Uterus (tissue), 4 donors: ENCODE measurements at regions of chr5 and their contacts with region 1.

Region 1: GRCh38 chr5:127040796-127041520 is 10.6 kb upstream of the MARCHF3 start:
- DNase-seq: peak; percentile 36 to 40
- H3K4me3 ChIP-seq: no peak overlapping the region
- H3K27ac ChIP-seq: peak overlapping the region; percentile 67 to 70
- H3K4me1 ChIP-seq: peaks cover 0 to 5% of the 10 kb centered on the region in 2 donors
- H3K27me3 ChIP-seq: no peaks in the 10 kb centered on the region
- CTCF ChIP-seq: no peak
- POLR2A ChIP-seq: no peak

Region 2: DNA sequence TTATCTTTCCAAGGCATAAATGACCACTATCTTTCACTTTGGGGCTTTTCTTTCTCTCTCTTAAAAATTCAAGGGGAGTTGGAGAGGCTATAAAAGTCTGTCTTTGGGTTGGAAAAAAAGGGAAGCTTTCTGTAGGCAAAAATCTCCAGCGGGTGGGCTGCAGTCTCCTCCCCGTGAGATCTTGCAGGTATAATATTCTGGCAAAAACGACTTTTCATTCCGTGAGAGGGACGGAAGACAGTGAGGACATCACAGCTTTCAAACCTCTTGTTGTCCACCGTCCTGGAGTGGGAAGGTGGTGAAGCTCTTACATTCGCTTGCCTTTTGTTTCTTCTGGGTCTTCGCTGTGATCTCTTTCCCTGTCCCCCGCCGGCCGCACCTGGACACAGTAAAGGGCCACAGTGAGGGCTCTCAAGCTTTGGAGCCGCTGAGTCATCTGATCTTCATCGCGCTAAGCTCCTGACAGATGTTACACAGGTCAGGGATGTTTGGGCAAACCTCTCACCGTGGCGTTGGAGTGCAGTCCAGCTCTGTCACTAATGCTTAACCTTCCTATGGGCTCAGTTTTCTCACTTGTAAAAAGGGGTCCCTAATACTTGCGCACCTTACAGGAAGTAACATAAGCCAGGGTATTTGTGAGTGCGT is 187.7 kb after region 1 on chr5:
- intact Hi-C with region 1: no loop called
- DNase-seq: peak; percentile 15 to 40
- H3K4me3 ChIP-seq: peak overlapping the region; percentile 40 to 48
- H3K27ac ChIP-seq: peak overlapping the region; percentile 73 to 82
- H3K4me1 ChIP-seq: no peaks in the 10 kb centered on the region
- H3K27me3 ChIP-seq: no peaks in the 10 kb centered on the region
- CTCF ChIP-seq: no peak
- POLR2A ChIP-seq: no peak

Region 3: GRCh38 chr5:127612441-127613141 is 571.6 kb after region 1 on chr5:
- intact Hi-C with region 1: no loop called
- DNase-seq: no peak
- H3K4me3 ChIP-seq: no peak overlapping the region
- H3K27ac ChIP-seq: no peak overlapping the region
- H3K4me1 ChIP-seq: no peaks in the 10 kb centered on the region
- H3K27me3 ChIP-seq: no peaks in the 10 kb centered on the region
- CTCF ChIP-seq: no peak
- POLR2A ChIP-seq: no peak

Region 4: DNA sequence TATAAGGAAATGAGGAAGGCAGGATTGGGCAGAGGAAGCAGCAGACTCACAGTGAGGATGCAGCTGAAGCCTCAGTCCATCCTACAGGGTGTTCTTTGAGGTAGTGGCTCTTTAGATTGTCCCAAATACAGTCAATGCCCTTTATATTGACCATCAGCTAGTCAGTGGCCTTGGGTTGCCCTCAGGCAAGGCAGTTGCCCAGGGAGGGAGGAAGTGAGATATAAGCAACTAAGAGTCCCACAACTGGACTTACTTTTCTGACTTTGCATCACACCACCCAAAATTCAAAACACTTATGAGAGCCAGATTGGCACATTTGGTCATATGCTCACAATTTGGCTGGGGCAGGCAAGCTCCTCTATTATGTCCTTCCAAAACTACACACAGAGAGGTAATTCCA is 1033.2 kb after region 1 on chr5:
- intact Hi-C with region 1: loop called (anchors 10 kb)
- DNase-seq: no peak
- H3K4me3 ChIP-seq: no peak overlapping the region
- H3K27ac ChIP-seq: no peak overlapping the region
- H3K4me1 ChIP-seq: no peaks in the 10 kb centered on the region
- H3K27me3 ChIP-seq: no peaks in the 10 kb centered on the region
- CTCF ChIP-seq: no peak
- POLR2A ChIP-seq: no peak